CD8-positive, alpha-beta T cell (primary cell): ENCODE measurements at regions of chr6 and their contacts with region 1.

Region 1: DNA sequence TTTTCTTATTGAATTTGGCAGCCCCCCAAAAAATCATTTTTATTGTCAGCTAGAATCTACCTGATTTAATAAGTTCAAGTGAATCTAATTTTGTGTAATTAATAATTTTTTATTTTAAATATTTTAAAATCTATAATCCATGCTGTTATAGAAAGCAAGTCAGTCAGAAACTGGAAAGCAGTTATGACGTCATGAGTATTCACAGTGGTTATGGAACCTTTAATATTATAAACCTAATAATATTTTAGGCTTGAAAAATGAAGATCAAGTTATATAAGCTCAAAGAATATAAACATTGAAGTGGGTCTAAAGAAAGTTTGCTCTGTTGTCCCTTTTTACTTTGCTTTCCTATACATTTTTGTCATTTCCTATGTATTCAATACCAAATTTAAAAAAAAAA is 1075.1 kb upstream of the EPHA7 start:
- DNase-seq: no peak
- ATAC-seq: no peak
- H3K4me3 ChIP-seq: no peak overlapping the region
- H3K4me3 Mint-ChIP-seq: no peak overlapping the region
- H3K27ac ChIP-seq: no peak overlapping the region
- H3K27ac Mint-ChIP-seq: no peak overlapping the region
- H3K4me1 ChIP-seq: no peaks in the 10 kb centered on the region
- H3K4me1 Mint-ChIP-seq: no peaks in the 10 kb centered on the region
- H3K27me3 ChIP-seq: no peaks in the 10 kb centered on the region
- H3K27me3 Mint-ChIP-seq: no peaks in the 10 kb centered on the region
- CTCF ChIP-seq: no peak

Region 2: GRCh38 chr6:92762443-92763273 is 1731.8 kb before region 1 on chr6:
- CTCF ChIA-PET with region 1: no interaction called
- POLR2A ChIA-PET with region 1: no interaction called
- intact Hi-C with region 1: loop called in 1 of 2 experiments (anchors 10 kb)
- DNase-seq: no peak
- ATAC-seq: no peak
- H3K4me3 ChIP-seq: no peak overlapping the region
- H3K4me3 Mint-ChIP-seq: no peak overlapping the region
- H3K27ac ChIP-seq: no peak overlapping the region
- H3K27ac Mint-ChIP-seq: no peak overlapping the region
- H3K4me1 ChIP-seq: no peaks in the 10 kb centered on the region
- H3K4me1 Mint-ChIP-seq: no peaks in the 10 kb centered on the region
- H3K27me3 ChIP-seq: no peaks in the 10 kb centered on the region
- H3K27me3 Mint-ChIP-seq: no peaks in the 10 kb centered on the region
- CTCF ChIP-seq: no peak